AG04449 (cell line): ENCODE measurements at regions of chr3 and their contacts with region 1.

Region 1: DNA sequence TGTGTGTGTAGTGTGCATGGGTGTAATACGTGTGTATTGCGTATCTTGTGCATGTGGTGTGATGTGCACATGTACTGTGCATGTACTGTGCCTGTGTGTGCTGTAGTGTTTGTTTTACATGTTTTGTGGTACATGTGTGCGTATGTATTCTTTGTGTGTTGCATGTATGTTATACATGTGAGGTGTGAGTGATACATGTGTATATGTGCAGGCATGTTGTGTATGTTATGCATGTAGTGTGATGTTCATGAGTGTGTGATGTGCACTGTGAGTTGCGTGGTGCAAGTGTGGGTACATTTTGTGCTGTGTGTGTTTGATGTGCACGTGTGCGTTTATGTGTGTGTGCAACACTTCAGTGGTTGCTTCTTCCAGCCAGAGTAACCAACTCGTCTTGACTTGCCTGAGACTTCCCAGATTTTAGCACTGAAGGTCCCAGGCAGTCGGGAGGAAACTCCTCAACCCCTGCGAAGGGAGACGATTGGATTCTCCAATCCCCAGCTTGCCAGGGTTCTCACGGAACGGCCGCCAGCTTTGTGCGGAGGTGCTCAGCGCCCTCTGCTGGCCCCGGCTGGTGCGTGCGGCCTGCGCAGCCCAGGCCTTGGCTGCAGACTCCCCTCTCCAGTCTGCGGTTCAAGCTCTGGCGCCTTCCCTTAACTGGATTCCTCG is 3.6 kb downstream of the GALNT15 start:
- DNase-seq: no peak
- H3K4me3 ChIP-seq: peak overlapping the region; percentile 65
- CTCF ChIP-seq: peak; percentile 100

Region 2: DNA sequence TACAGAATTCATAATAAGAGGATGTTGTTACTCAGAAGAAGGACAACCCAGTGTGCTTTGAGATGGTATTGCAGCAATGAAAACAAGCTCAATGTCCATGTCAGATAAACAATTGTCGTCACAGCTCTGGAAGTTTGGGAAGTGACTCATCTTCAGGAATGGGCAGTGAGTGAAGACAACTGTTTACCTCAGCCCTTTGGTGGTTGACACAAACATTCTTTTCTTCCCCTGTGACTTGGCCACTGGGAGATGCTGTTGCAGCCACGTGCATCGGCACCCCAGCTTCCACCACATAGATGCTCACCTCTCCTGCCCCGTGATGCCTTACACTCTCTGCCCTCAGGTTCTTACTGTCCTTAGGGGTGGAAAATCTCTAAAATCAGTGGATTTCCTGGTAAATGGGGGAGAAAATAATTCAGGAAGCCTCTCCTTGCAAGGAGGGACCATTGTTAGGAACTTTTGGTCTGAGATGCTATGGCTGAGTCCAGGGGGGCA is 117.7 kb before region 1 on chr3:
- CTCF ChIA-PET with region 1: interaction called, 144 read pairs
- POLR2A ChIA-PET with region 1: interaction called, 21 read pairs
- DNase-seq: peak; percentile 100
- H3K4me3 ChIP-seq: no peak overlapping the region
- CTCF ChIP-seq: peak; percentile 38

Region 3: DNA sequence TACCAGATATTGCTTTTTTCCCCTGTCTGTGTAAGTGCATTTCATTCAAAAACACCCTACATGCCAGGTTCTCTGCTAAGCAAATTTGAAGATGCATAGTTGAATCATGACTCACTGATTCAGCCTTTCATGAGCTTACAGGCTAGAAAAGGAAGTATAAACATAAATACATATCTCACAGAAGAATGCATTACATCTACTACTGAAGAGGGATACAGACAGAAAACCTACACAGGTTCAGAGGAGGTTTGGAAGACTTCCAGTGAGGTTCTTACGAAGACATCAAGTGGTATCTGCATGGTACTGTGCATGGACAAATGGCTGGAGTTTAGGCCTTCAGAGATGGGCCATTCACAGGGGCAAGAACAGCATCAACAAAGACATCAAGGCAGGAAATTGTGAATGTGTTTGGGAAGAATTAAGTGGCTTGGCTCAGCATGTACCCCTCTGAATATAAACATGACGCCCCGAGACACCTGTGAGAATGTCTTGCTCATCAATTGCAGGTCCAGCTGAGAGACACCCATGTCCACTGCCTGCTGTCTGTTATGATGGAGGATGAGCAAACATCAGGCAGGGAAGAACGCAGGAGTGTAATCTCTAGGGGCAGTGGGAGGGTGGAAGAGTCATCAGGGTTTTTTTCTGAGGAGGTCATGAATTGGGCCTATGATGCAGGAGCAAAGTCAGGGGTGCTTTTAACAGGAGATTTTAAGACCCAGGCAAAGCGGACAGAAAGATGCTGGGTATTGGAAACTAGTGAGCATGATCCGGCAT is 108.8 kb before region 1 on chr3:
- CTCF ChIA-PET with region 1: interaction called, 36 read pairs
- POLR2A ChIA-PET with region 1: interaction called, 3 read pairs
- DNase-seq: peak; percentile 94
- H3K4me3 ChIP-seq: no peak overlapping the region
- CTCF ChIP-seq: no peak

Region 4: DNA sequence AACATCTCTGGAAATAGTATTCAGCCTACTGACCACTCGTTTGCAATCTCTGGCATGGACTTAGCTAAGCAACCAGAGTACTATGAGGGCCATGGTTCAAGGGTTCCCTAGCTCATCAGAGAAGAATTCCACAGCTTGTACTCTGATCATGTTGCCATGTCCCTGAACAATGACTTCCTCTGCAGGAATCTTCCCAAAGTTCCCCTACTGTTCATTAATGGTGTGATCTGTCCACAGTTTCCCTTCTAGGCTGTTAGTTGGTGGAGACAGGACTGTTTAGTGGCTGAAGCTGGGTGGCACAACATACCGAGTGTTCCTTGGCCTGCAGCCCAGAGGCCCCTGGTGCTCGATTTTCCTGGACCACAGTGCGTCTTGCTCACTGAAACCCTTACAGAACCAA is 48.0 kb before region 1 on chr3:
- CTCF ChIA-PET with region 1: interaction called, 13 read pairs
- POLR2A ChIA-PET with region 1: interaction called, 12 read pairs
- DNase-seq: peak; percentile 94
- H3K4me3 ChIP-seq: no peak overlapping the region
- CTCF ChIP-seq: no peak

Region 5: GRCh38 chr3:16148783-16149182 is 29.3 kb before region 1 on chr3:
- CTCF ChIA-PET with region 1: interaction called, 7 read pairs
- POLR2A ChIA-PET with region 1: interaction called, 12 read pairs
- DNase-seq: peak; percentile 51
- H3K4me3 ChIP-seq: no peak overlapping the region
- CTCF ChIP-seq: no peak

Region 6: GRCh38 chr3:16190704-16191103 is 12.6 kb after region 1 on chr3:
- CTCF ChIA-PET with region 1: interaction called, 17 read pairs
- POLR2A ChIA-PET with region 1: no interaction called
- DNase-seq: no peak
- H3K4me3 ChIP-seq: no peak overlapping the region
- CTCF ChIP-seq: no peak

Region 7: DNA sequence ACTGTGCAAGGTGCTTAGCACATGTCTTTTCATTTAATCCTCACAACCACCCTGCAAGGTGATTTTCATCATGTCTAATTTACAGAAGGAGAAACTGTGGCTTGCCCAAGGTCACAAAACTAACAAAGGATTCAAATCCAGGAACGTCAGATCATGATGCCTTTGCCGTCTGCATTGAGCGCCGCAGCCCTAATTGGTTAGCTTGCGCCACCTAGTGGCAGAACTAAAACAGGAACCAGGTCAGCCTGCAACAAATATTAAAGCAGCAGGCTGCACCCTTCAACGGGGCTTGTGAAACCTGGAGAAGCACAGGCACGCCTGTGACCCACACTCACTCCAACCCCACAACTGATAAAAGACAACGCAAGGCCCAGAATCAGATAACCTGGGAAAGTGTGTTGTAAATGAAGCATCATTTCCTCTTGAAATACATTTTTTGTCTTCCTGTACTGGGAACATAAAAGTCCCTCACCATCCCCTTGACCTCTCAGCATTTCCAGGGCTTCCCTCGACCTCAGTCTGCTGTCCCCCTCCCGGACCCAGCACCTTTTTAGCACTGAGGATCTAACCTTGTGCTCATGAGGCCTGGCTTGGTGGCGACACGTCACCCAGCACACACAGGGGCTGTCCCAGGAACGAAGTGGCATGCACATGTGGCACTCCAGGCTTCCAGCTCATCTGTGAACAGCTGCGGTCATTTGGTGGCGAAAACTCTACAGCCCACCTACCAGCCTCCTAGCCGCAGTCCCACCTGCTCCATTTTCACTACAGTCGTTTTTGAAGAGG is 69.4 kb after region 1 on chr3:
- CTCF ChIA-PET with region 1: interaction called, 13 read pairs
- POLR2A ChIA-PET with region 1: interaction called, 4 read pairs
- DNase-seq: peak; percentile 31
- H3K4me3 ChIP-seq: no peak overlapping the region
- CTCF ChIP-seq: peak; percentile 82

Region 8: GRCh38 chr3:16279010-16279801 is 101.1 kb after region 1 on chr3:
- CTCF ChIA-PET with region 1: no interaction called
- POLR2A ChIA-PET with region 1: no interaction called
- DNase-seq: no peak
- H3K4me3 ChIP-seq: no peak overlapping the region
- CTCF ChIP-seq: no peak

Region 9: GRCh38 chr3:16404349-16404895 is 226.3 kb after region 1 on chr3:
- CTCF ChIA-PET with region 1: no interaction called
- POLR2A ChIA-PET with region 1: no interaction called
- DNase-seq: no peak
- H3K4me3 ChIP-seq: no peak overlapping the region
- CTCF ChIP-seq: no peak